ENCODE measurements at regions of chr18 and their contacts with region 1.

Region 1: GRCh38 chr18:52190631-52191030 is 149.4 kb upstream of the DCC start:
- DNase-seq: no peak
- ATAC-seq: no peak
- H3K4me3 ChIP-seq: no peak overlapping the region
- H3K4me3 Mint-ChIP-seq: no peak overlapping the region
- H3K27ac ChIP-seq: no peak overlapping the region
- H3K27ac Mint-ChIP-seq: no peak overlapping the region
- H3K4me1 ChIP-seq: no peaks in the 10 kb centered on the region
- H3K4me1 Mint-ChIP-seq: no peaks in the 10 kb centered on the region
- H3K27me3 ChIP-seq: no peaks in the 10 kb centered on the region
- H3K27me3 Mint-ChIP-seq: no peaks in the 10 kb centered on the region
- CTCF ChIP-seq: no peak

Region 2: DNA sequence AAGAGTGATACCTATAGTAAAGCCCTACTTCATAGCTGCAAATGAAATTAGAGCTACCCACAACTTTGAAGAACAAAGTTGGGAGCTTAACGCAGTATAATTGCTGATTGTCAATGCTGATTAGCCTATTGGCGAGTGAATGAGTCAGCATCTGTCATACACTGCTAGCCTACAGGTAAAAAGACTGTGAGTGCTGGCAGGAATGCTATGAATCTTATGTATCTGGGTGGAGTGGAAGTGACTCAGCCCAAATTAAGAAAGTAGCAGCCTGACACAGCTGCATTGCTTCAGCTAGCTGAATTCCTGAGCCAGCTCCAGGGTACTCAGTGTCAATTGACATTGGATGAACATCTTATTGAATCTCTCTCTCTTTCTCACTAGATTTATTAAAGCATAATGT is 30.0 kb before region 1 on chr18:
- CTCF ChIA-PET with region 1: no interaction called
- POLR2A ChIA-PET with region 1: no interaction called
- intact Hi-C with region 1: no loop called
- DNase-seq: no peak
- ATAC-seq: no peak
- H3K4me3 ChIP-seq: no peak overlapping the region
- H3K4me3 Mint-ChIP-seq: no peak overlapping the region
- H3K27ac ChIP-seq: no peak overlapping the region
- H3K27ac Mint-ChIP-seq: no peak overlapping the region
- H3K4me1 ChIP-seq: no peaks in the 10 kb centered on the region
- H3K4me1 Mint-ChIP-seq: no peaks in the 10 kb centered on the region
- H3K27me3 ChIP-seq: no peaks in the 10 kb centered on the region
- H3K27me3 Mint-ChIP-seq: no peaks in the 10 kb centered on the region
- CTCF ChIP-seq: no peak

Region 3: DNA sequence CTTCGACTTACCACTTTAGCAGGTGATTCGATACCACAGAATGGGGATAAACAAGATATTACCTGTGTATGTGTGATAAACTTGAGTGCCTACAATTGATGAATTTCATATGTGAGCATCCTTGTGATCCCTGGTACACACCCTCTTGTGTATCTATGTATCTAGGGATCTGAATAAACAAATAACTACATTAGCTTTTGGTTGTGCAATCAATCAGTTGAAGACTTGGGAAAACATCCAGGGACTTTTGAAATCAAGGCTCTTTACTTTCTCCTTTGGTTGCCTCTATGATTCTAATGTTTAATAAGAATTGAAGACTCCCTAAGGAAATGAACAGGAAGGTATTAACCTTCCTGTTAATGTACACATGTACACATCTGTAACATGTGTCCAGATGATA is 52.1 kb after region 1 on chr18:
- CTCF ChIA-PET with region 1: no interaction called
- POLR2A ChIA-PET with region 1: no interaction called
- intact Hi-C with region 1: loop called (anchors 10 kb)
- DNase-seq: no peak
- ATAC-seq: no peak
- H3K4me3 ChIP-seq: no peak overlapping the region
- H3K4me3 Mint-ChIP-seq: no peak overlapping the region
- H3K27ac ChIP-seq: no peak overlapping the region
- H3K27ac Mint-ChIP-seq: no peak overlapping the region
- H3K4me1 ChIP-seq: no peaks in the 10 kb centered on the region
- H3K4me1 Mint-ChIP-seq: no peaks in the 10 kb centered on the region
- H3K27me3 ChIP-seq: no peaks in the 10 kb centered on the region
- H3K27me3 Mint-ChIP-seq: no peaks in the 10 kb centered on the region
- CTCF ChIP-seq: no peak